ENCODE measurements at regions of chr10 and their contacts with region 1.

Region 1: GRCh38 chr10:74234569-74234968 is 83.5 kb downstream of the ADK start:
- DNase-seq: no peak
- CTCF ChIP-seq: peak; percentile 46

Region 2: DNA sequence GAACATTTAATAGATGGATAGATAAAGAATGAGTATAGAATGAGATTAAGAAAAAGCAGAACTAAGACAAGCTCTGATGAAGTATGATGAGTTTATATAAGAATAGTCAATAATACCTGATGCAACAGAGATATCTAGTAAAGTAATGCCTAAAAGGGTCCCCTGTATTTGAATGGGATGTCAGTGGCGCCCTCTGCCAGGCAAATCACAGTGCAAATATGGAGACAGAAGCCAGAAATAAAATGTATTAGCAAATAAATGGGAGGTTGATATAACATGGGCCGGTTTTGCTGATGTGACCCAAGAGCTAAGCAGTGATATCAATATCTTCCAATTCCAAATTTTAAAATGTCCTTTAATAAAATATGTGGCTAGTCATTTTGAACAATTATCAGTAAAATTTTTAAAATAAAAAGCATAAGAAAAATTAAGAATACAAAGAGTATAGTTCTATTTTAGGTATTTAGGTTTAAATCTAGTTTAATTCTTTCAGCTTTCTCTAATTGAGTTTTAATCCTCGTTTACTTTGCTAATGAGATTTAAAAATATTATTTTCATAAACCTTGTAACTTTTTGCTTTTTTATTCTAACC is 20.9 kb before region 1 on chr10:
- CTCF ChIA-PET with region 1: interaction called, 10 read pairs
- POLR2A ChIA-PET with region 1: no interaction called
- DNase-seq: peak; percentile 42
- CTCF ChIP-seq: peak; percentile 41

Region 3: GRCh38 chr10:74293686-74294371 is 59.3 kb after region 1 on chr10:
- CTCF ChIA-PET with region 1: no interaction called
- POLR2A ChIA-PET with region 1: interaction called, 10 read pairs
- DNase-seq: no peak
- CTCF ChIP-seq: no peak

Region 4: GRCh38 chr10:74371696-74372095 is 137.1 kb after region 1 on chr10:
- CTCF ChIA-PET with region 1: no interaction called
- POLR2A ChIA-PET with region 1: no interaction called
- DNase-seq: no peak
- CTCF ChIP-seq: no peak